Left colon (tissue), 2 donors: ENCODE measurements at regions of chr10 and their contacts with region 1.

Region 1: DNA sequence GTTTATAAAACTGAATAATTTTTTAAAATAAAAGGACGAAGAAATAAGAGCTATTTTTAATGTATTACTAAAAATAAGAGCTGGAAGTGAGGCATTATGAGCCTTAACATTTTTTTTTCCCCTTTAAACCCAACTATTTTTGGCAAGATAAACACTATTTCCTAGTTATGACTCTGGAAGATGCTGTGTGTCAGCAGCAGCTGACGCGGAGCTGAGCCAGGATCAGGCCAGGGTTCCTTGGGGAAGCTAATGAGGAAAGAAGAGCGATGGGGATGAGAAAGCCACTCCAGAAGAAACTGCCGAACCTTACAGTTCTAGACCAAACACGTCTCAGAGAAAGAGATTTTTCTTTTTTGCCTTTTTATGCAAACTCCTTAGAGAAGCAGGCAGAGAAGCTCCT is 85.9 kb downstream of the USP6NL start:
- DNase-seq: peak in 1 of 2 donors; percentile 35
- ATAC-seq: no peak

Region 2: GRCh38 chr10:10959666-10960065 is 565.8 kb before region 1 on chr10:
- intact Hi-C with region 1: no loop called
- DNase-seq: no peak
- ATAC-seq: no peak

Region 3: DNA sequence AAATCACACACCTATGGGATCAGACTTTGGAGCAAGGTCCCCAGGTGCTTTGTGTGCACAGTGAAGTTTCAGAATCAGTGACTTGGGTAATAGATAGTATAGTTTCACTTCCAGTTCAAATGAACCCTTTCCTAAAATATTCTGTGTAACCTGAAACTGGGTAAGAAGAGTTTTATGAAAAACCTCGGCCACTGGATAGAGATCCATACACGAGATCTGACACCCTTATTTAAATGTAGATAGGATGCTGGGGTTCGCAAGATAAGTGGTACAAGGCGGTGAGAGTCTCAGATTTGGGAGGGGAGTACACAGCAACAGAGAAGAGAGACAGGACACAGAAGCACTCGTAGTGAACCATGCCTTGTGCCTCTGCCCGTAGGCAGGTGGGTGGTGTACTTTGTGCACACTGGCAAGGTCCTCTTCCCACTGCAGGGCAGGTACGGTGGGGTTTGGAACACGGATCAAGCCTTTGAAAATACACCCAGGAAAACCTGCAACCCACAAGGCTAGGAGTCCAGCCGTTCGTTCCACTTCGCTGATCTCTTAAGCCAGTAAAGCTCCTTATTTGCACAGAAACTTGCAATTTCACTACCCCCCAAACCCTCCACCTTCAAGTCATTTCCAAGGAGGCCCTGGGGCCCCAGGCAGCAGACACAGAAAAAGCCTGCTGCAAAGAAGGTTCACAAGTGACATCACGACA is 76.8 kb before region 1 on chr10:
- intact Hi-C with region 1: no loop called
- DNase-seq: no peak
- ATAC-seq: no peak

Region 4: GRCh38 chr10:11602919-11603523 is 77.5 kb after region 1 on chr10:
- intact Hi-C with region 1: loop called in 1 of 2 experiments (anchors 10 kb)
- DNase-seq: no peak
- ATAC-seq: peak; percentile 76